ENCODE measurements at regions of chr2 and their contacts with region 1.

Region 1: GRCh38 chr2:174465327-174465726 is 21.5 kb downstream of the GPR155 start:
- DNase-seq: no peak
- ATAC-seq: no peak
- H3K4me3 ChIP-seq: no peak overlapping the region
- H3K4me3 Mint-ChIP-seq: no peak overlapping the region
- H3K27ac ChIP-seq: no peak overlapping the region
- H3K27ac Mint-ChIP-seq: peak overlapping the region in 2 of 9 donors; percentile 31 to 49
- H3K4me1 ChIP-seq: no peaks in the 10 kb centered on the region
- H3K4me1 Mint-ChIP-seq: peaks cover 0 to 7% (median 0%) of the 10 kb centered on the region in 7 donors
- H3K27me3 ChIP-seq: no peaks in the 10 kb centered on the region
- H3K27me3 Mint-ChIP-seq: no peaks in the 10 kb centered on the region

Region 2: DNA sequence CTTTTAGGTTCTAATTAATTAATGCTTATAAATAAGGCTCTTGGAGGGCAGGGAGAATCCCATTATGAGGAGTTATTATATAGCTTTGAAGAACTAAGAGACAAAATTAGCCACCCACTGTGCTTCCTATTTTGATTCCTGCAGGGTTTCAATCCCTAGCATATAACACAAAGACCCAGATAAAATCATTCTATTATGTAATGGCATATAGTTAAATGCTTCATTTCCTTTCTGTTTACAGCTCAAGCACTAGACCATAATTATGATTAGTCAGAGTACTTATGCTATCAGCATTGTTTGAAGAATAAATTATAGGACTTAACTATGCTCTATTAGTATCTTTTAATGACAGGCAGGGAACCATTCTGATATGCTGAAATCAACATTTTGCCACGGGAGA is 12.4 kb after region 1 on chr2:
- CTCF ChIA-PET with region 1: interaction called, 12 read pairs
- POLR2A ChIA-PET with region 1: interaction called, 5 read pairs
- intact Hi-C with region 1: loop called in 1 of 2 experiments (anchors 2 kb)
- DNase-seq: no peak
- ATAC-seq: no peak
- H3K4me3 ChIP-seq: no peak overlapping the region
- H3K4me3 Mint-ChIP-seq: no peak overlapping the region
- H3K27ac ChIP-seq: no peak overlapping the region
- H3K27ac Mint-ChIP-seq: peak overlapping the region in 1 of 9 donors; percentile 11
- H3K4me1 ChIP-seq: no peaks in the 10 kb centered on the region
- H3K4me1 Mint-ChIP-seq: peaks cover 0 to 50% (median 24%) of the 10 kb centered on the region in 7 donors
- H3K27me3 ChIP-seq: no peaks in the 10 kb centered on the region
- H3K27me3 Mint-ChIP-seq: peaks cover 0 to 2% (median 0%) of the 10 kb centered on the region in 5 donors

Region 3: GRCh38 chr2:174492963-174493431 is 27.7 kb after region 1 on chr2:
- CTCF ChIA-PET with region 1: interaction called, 14 read pairs
- POLR2A ChIA-PET with region 1: interaction called, 17 read pairs
- intact Hi-C with region 1: no loop called
- DNase-seq: peak; percentile 18 to 89 (median 85)
- ATAC-seq: peak; percentile 95
- H3K4me3 ChIP-seq: peak overlapping the region; percentile 36
- H3K4me3 Mint-ChIP-seq: peak overlapping the region; percentile 74 to 92 (median 87)
- H3K27ac ChIP-seq: peak overlapping the region; percentile 85
- H3K27ac Mint-ChIP-seq: peak overlapping the region; percentile 91 to 100 (median 98)
- H3K4me1 ChIP-seq: peaks cover 49 to 50% of the 10 kb centered on the region in 2 donors
- H3K4me1 Mint-ChIP-seq: peaks cover 40 to 87% (median 77%) of the 10 kb centered on the region in 7 donors
- H3K27me3 ChIP-seq: no peaks in the 10 kb centered on the region
- H3K27me3 Mint-ChIP-seq: no peaks in the 10 kb centered on the region

Region 4: GRCh38 chr2:174546581-174547506 is 81.5 kb after region 1 on chr2:
- CTCF ChIA-PET with region 1: interaction called, 16 read pairs
- POLR2A ChIA-PET with region 1: interaction called, 4 read pairs
- intact Hi-C with region 1: loop called (anchors 1 kb)
- DNase-seq: peak in 4 of 9 donors; percentile 13 to 38 (median 22)
- ATAC-seq: peak; percentile 91
- H3K4me3 ChIP-seq: no peak overlapping the region
- H3K4me3 Mint-ChIP-seq: no peak overlapping the region
- H3K27ac ChIP-seq: no peak overlapping the region
- H3K27ac Mint-ChIP-seq: peak overlapping the region; percentile 11 to 88 (median 68)
- H3K4me1 ChIP-seq: peaks cover under 1 to 3% of the 10 kb centered on the region in 2 donors
- H3K4me1 Mint-ChIP-seq: peaks cover 5 to 17% (median 13%) of the 10 kb centered on the region in 7 donors
- H3K27me3 ChIP-seq: no peaks in the 10 kb centered on the region
- H3K27me3 Mint-ChIP-seq: peaks cover 0 to 8% (median 0%) of the 10 kb centered on the region in 5 donors

Region 5: DNA sequence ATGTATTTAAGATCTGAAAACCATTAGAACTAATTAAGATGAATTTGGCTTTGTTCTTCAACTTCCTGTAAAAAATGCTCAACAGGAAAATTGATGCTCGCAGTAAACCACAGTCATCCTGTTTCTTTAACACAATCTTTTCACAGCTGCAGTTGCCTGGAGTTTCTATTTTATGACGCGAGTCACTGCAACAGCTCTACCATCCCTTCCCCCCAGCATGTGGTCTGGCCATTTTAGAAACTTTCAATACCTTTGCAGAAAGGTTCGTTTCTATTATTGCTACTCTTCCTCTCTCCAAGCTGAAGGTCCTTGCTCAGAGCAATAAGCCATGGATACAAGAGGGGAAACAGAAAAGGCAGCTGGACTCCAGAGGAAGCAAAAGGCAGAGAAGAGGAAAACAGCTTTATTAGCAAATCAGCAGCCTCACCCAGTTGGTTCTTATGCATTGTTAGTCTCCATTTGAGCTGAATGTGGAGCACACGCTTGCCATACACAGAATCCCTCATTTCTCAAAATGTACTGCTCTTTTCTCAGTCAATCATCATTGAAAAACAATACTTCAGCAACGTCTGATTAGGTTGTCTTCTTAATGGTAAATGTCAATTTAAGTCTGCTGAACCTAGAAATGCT is 128.4 kb after region 1 on chr2:
- CTCF ChIA-PET with region 1: interaction called, 12 read pairs
- POLR2A ChIA-PET with region 1: interaction called, 4 read pairs
- intact Hi-C with region 1: no loop called
- DNase-seq: peak in 8 of 9 donors; percentile 53 to 92 (median 90)
- ATAC-seq: peak; percentile 87
- H3K4me3 ChIP-seq: peak overlapping the region; percentile 59
- H3K4me3 Mint-ChIP-seq: peak overlapping the region; percentile 87 to 100 (median 92)
- H3K27ac ChIP-seq: peak overlapping the region; percentile 90
- H3K27ac Mint-ChIP-seq: peak overlapping the region; percentile 90 to 99 (median 97)
- H3K4me1 ChIP-seq: peaks cover 42 to 44% of the 10 kb centered on the region in 2 donors
- H3K4me1 Mint-ChIP-seq: peaks cover 47 to 69% (median 59%) of the 10 kb centered on the region in 7 donors
- H3K27me3 ChIP-seq: no peaks in the 10 kb centered on the region
- H3K27me3 Mint-ChIP-seq: no peaks in the 10 kb centered on the region

Region 6: DNA sequence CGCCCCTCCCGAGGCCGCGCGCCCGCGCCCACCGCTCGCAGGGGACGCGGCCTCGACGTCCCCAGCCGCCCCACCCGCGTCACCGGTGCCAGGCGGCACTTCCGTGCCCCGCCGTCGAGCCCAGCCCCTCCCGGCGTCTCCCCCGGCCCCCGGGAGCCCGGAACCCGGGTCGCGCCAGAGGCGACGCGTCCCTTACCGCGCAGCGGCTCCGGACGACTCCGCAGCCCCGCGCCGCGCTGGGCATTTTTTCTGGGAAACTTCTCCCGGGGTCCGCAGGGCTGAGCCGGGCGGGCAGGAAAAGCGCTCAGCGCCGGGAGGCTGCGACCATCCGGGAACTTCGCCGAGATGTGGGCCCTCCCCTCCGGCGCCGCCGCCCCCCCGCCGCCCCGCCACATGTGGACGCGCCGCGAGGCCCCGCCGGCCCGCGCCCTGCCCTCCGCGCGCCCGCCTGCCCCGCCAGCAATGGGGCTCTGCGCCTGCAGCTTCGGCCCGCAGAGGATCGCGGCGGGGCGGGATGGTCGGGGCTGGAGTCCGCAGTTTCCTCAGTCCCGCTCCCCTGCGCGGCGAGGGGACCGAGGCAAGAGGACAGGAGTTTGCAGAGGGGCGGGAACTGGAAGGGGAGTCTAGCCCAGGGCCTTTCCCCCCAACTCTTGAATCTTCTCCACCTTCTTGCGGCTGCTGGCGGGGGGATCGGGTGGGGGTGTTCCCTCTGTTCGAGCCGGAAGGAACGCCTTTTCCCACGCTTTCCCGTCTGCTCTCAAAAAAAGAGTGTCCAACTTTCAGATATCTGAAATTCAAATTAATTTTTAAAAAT is 217.5 kb after region 1 on chr2:
- CTCF ChIA-PET with region 1: interaction called, 66 read pairs
- POLR2A ChIA-PET with region 1: interaction called, 8 read pairs
- intact Hi-C with region 1: loop called in 1 of 2 experiments (anchors 1 kb)
- DNase-seq: peak; percentile 56 to 73 (median 71)
- ATAC-seq: peak; percentile 78
- H3K4me3 ChIP-seq: peak overlapping the region; percentile 72
- H3K4me3 Mint-ChIP-seq: peak overlapping the region; percentile 92 to 99 (median 96)
- H3K27ac ChIP-seq: peak overlapping the region; percentile 88
- H3K27ac Mint-ChIP-seq: peak overlapping the region; percentile 91 to 98 (median 96)
- H3K4me1 ChIP-seq: peaks cover 11% of the 10 kb centered on the region in 2 donors
- H3K4me1 Mint-ChIP-seq: peaks cover 34 to 69% (median 61%) of the 10 kb centered on the region in 7 donors
- H3K27me3 ChIP-seq: no peaks in the 10 kb centered on the region
- H3K27me3 Mint-ChIP-seq: no peaks in the 10 kb centered on the region

Region 7: GRCh38 chr2:174697255-174697654 is 231.9 kb after region 1 on chr2:
- CTCF ChIA-PET with region 1: interaction called, 14 read pairs
- POLR2A ChIA-PET with region 1: no interaction called
- intact Hi-C with region 1: no loop called
- DNase-seq: peak in 8 of 9 donors; percentile 38 to 60 (median 49)
- ATAC-seq: peak; percentile 93
- H3K4me3 ChIP-seq: no peak overlapping the region
- H3K4me3 Mint-ChIP-seq: no peak overlapping the region
- H3K27ac ChIP-seq: no peak overlapping the region
- H3K27ac Mint-ChIP-seq: peak overlapping the region in 1 of 9 donors; percentile 55
- H3K4me1 ChIP-seq: no peaks in the 10 kb centered on the region
- H3K4me1 Mint-ChIP-seq: peaks cover 0 to 7% (median 0%) of the 10 kb centered on the region in 7 donors
- H3K27me3 ChIP-seq: no peaks in the 10 kb centered on the region
- H3K27me3 Mint-ChIP-seq: peaks cover 0 to 40% (median 0%) of the 10 kb centered on the region in 5 donors